Activated CD8-positive, alpha-beta T cell treated with anti-CD3 and anti-CD28 coated beads for 36 hours (primary cell): ENCODE measurements at regions of chr3 and their contacts with region 1.

Region 1: DNA sequence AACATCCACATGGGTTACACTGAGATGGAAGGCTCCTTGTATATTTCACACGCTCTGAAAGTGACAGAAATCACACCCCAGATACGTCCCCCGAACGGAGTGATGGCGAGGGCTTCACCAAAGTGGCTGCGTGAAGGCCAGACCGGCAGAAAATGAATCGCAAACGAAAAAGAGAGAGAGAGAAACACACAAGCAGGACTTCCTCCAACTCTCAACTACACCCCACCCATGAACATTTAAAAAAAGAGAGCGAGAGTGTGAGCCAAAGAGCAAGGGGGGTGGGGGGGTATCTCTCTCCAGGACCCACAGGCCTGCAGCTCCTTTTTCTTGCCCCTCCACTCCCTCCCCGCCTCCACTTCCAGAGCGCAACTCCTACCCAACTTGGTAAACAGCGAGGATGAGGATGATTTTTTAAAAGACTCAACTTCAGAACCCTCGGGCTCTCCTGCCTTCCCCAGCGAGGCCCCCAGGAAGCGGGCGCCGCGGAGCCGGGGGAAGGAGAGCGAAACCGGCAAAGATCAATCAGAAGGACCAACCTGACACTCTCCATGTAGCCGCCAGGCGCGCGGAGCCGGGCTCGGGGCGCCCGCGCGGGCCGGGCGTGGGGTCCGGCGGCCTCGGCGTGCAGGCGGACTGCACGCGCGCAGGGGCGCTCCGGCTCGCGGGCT is 519.1 kb downstream of the FOXP1 start:
- DNase-seq: peak; percentile 71
- ATAC-seq: peak; percentile 17
- H3K4me3 Mint-ChIP-seq: no peak overlapping the region
- H3K27ac Mint-ChIP-seq: no peak overlapping the region
- H3K4me1 Mint-ChIP-seq: peaks cover 59% of the 10 kb centered on the region
- H3K27me3 Mint-ChIP-seq: no peaks in the 10 kb centered on the region
- CTCF ChIP-seq: no peak

Region 2: GRCh38 chr3:70488131-70488530 is 576.3 kb before region 1 on chr3:
- CTCF ChIA-PET with region 1: no interaction called
- POLR2A ChIA-PET with region 1: no interaction called
- intact Hi-C with region 1: no loop called
- DNase-seq: no peak
- ATAC-seq: no peak
- H3K4me3 Mint-ChIP-seq: no peak overlapping the region
- H3K27ac Mint-ChIP-seq: no peak overlapping the region
- H3K4me1 Mint-ChIP-seq: no peaks in the 10 kb centered on the region
- H3K27me3 Mint-ChIP-seq: peaks cover 18% of the 10 kb centered on the region
- CTCF ChIP-seq: no peak

Region 3: GRCh38 chr3:70550723-70551319 is 513.6 kb before region 1 on chr3:
- CTCF ChIA-PET with region 1: interaction called, 3 read pairs
- POLR2A ChIA-PET with region 1: no interaction called
- intact Hi-C with region 1: loop called (anchors 10 kb)
- DNase-seq: peak; percentile 85
- ATAC-seq: peak; percentile 86
- H3K4me3 Mint-ChIP-seq: no peak overlapping the region
- H3K27ac Mint-ChIP-seq: no peak overlapping the region
- H3K4me1 Mint-ChIP-seq: no peaks in the 10 kb centered on the region
- H3K27me3 Mint-ChIP-seq: peaks cover 1% of the 10 kb centered on the region
- CTCF ChIP-seq: peak; percentile 72

Region 4: DNA sequence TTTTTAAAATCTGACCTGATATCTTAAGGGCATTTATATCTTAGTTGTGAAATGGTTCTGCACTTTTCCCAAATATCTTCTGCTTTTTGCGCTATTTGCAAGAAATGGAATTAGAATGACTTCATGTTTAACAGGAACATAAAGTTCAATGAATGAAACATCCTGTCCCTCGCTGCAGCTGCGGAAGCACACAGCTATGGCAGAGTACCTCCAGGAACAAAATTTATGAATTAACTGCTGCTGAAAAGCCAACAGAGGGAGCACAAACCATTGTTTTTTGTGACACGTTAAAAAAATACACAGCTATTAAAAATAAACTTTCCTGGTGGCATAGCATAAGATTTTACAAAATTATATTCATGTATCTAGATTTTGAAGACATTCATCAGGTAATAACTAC is 347.6 kb before region 1 on chr3:
- CTCF ChIA-PET with region 1: no interaction called
- POLR2A ChIA-PET with region 1: no interaction called
- intact Hi-C with region 1: no loop called
- DNase-seq: peak; percentile 9
- ATAC-seq: no peak
- H3K4me3 Mint-ChIP-seq: no peak overlapping the region
- H3K27ac Mint-ChIP-seq: no peak overlapping the region
- H3K4me1 Mint-ChIP-seq: no peaks in the 10 kb centered on the region
- H3K27me3 Mint-ChIP-seq: peaks cover 19% of the 10 kb centered on the region
- CTCF ChIP-seq: no peak

Region 5: GRCh38 chr3:71050538-71051258 is 13.7 kb before region 1 on chr3:
- CTCF ChIA-PET with region 1: interaction called, 5 read pairs
- POLR2A ChIA-PET with region 1: interaction called, 39 read pairs
- intact Hi-C with region 1: no loop called
- DNase-seq: peak; percentile 80
- ATAC-seq: peak; percentile 87
- H3K4me3 Mint-ChIP-seq: peak overlapping the region; percentile 16
- H3K27ac Mint-ChIP-seq: peak overlapping the region; percentile 90
- H3K4me1 Mint-ChIP-seq: peaks cover 100% of the 10 kb centered on the region
- H3K27me3 Mint-ChIP-seq: no peaks in the 10 kb centered on the region
- CTCF ChIP-seq: no peak

Region 6: GRCh38 chr3:71087143-71088018 is 23.0 kb after region 1 on chr3:
- CTCF ChIA-PET with region 1: interaction called, 9 read pairs
- POLR2A ChIA-PET with region 1: interaction called, 17 read pairs
- intact Hi-C with region 1: loop called (anchors 1 kb)
- DNase-seq: peak; percentile 71
- ATAC-seq: peak; percentile 72
- H3K4me3 Mint-ChIP-seq: peak overlapping the region; percentile 57
- H3K27ac Mint-ChIP-seq: peak overlapping the region; percentile 93
- H3K4me1 Mint-ChIP-seq: peaks cover 90% of the 10 kb centered on the region
- H3K27me3 Mint-ChIP-seq: no peaks in the 10 kb centered on the region
- CTCF ChIP-seq: no peak

Region 7: GRCh38 chr3:71226565-71227269 is 162.3 kb after region 1 on chr3:
- CTCF ChIA-PET with region 1: no interaction called
- POLR2A ChIA-PET with region 1: interaction called, 22 read pairs
- intact Hi-C with region 1: loop called (anchors 2 kb)
- DNase-seq: peak; percentile 95
- ATAC-seq: peak; percentile 88
- H3K4me3 Mint-ChIP-seq: peak overlapping the region; percentile 76
- H3K27ac Mint-ChIP-seq: peak overlapping the region; percentile 96
- H3K4me1 Mint-ChIP-seq: peaks cover 83% of the 10 kb centered on the region
- H3K27me3 Mint-ChIP-seq: no peaks in the 10 kb centered on the region
- CTCF ChIP-seq: no peak